Mammary epithelial cell (primary cell): ENCODE measurements at regions of chr7 and their contacts with region 1.

Region 1: GRCh38 chr7:114085592-114086501 is 167.0 kb upstream of the PPP1R3A start:
- DNase-seq: peak; percentile 16
- H3K4me3 ChIP-seq: peak overlapping the region; percentile 1 to 38 (median 38)
- H3K27ac ChIP-seq: no peak overlapping the region
- H3K4me1 ChIP-seq: peaks cover 13% of the 10 kb centered on the region
- H3K27me3 ChIP-seq: peaks cover 60% of the 10 kb centered on the region
- CTCF ChIP-seq: no peak

Region 2: DNA sequence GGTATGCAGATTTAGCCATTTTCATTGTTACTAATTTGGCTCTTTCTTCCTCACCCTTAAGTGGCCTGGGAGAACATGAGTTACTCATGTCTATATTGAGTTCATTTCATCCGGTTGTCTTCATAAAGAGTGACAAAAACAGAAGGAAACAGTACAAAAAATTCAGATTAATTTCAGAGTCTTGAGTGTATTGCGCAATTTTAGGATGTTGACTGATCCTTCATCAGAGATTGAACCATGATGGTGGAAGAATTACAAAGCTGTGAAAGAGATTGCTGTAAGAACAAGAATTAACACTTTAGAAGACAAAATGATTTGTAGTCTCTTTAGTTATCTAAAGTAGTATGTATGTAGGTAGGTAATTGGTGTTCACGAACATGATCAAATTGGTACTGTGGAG is 27.0 kb after region 1 on chr7:
- CTCF ChIA-PET with region 1: no interaction called
- dilution Hi-C with region 1: no loop called
- in situ Hi-C with region 1: no loop called
- intact Hi-C with region 1: no loop called
- DNase-seq: no peak
- H3K4me3 ChIP-seq: no peak overlapping the region
- H3K27ac ChIP-seq: no peak overlapping the region
- H3K4me1 ChIP-seq: no peaks in the 10 kb centered on the region
- H3K27me3 ChIP-seq: no peaks in the 10 kb centered on the region
- CTCF ChIP-seq: no peak

Region 3: DNA sequence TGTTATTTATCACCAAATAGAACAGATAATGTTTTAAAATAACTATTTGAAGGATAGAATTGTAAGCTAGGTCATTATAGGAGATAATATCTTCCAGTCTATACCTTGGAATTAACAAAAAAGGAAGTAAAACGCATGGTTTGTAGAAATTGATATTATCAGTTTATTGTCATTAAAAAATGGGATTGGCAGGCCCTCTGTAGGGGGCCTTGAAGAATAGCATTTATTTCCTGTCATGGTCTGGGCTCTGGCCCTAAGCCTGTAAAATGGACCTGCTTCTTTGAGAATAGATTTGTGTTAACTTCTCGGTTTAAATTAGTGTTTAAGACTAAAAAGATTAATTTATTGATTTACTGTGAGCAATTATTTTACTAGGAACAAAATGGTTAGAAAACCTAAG is 131.2 kb after region 1 on chr7:
- CTCF ChIA-PET with region 1: no interaction called
- dilution Hi-C with region 1: no loop called
- in situ Hi-C with region 1: no loop called
- intact Hi-C with region 1: loop called (anchors 1 kb)
- DNase-seq: no peak
- H3K4me3 ChIP-seq: no peak overlapping the region
- H3K27ac ChIP-seq: no peak overlapping the region
- H3K4me1 ChIP-seq: no peaks in the 10 kb centered on the region
- H3K27me3 ChIP-seq: no peaks in the 10 kb centered on the region
- CTCF ChIP-seq: peak; percentile 7 to 39

Region 4: DNA sequence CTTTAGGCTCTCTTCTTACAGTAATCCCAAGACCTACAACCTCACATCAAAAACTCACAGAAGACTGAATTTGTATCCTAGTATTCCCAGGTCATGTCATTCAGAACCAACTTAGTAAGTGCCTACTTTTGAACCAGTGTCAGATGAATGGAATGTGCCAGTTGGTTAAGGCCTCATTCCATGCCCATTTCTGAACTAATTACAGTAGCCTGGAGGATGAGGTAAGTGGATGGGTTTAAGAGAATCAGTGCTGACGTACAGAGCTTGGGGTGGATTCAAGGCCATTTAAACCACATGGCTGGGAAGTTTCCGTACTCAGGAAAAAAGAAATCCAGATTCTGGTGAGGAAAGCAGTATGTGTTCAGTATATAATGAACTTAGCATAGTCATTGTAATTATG is 306.8 kb after region 1 on chr7:
- CTCF ChIA-PET with region 1: no interaction called
- dilution Hi-C with region 1: no loop called
- in situ Hi-C with region 1: loop called in 1 of 2 experiments (anchors 25 kb)
- intact Hi-C with region 1: no loop called
- DNase-seq: peak; percentile 27
- H3K4me3 ChIP-seq: no peak overlapping the region
- H3K27ac ChIP-seq: no peak overlapping the region
- H3K4me1 ChIP-seq: no peaks in the 10 kb centered on the region
- H3K27me3 ChIP-seq: peaks cover 2% of the 10 kb centered on the region
- CTCF ChIP-seq: no peak

Region 5: GRCh38 chr7:114663502-114663901 is 577.7 kb after region 1 on chr7:
- CTCF ChIA-PET with region 1: interaction called, 4 read pairs
- dilution Hi-C with region 1: no loop called
- in situ Hi-C with region 1: no loop called
- intact Hi-C with region 1: loop called (anchors 2 kb)
- DNase-seq: peak; percentile 3
- H3K4me3 ChIP-seq: no peak overlapping the region
- H3K27ac ChIP-seq: no peak overlapping the region
- H3K4me1 ChIP-seq: no peaks in the 10 kb centered on the region
- H3K27me3 ChIP-seq: no peaks in the 10 kb centered on the region
- CTCF ChIP-seq: peak in 1 of 2 donors; percentile 37

Region 6: DNA sequence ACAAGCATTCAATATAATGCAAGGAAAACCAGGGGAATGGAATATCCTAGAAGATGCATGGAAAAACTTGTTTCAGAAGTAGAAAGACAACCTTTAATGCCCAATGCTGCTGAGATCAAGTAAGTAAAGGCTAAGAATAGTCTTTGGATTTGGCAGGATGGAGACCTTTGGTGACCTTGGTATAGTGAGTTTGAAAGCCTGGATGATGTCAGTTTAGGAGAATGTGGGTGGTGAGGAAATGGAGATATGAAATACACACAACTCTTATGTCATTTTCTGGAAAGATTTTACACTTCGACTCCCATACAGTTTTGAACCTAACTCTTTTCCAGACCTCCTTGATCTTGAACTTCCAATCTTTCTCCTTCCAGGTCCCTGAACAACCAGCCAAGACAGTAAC is 1759.0 kb after region 1 on chr7:
- CTCF ChIA-PET with region 1: no interaction called
- dilution Hi-C with region 1: no loop called
- in situ Hi-C with region 1: no loop called
- intact Hi-C with region 1: loop called (anchors 5 kb)
- DNase-seq: no peak
- H3K4me3 ChIP-seq: no peak overlapping the region
- H3K27ac ChIP-seq: no peak overlapping the region
- H3K4me1 ChIP-seq: no peaks in the 10 kb centered on the region
- H3K27me3 ChIP-seq: peaks cover 3% of the 10 kb centered on the region
- CTCF ChIP-seq: no peak